OCI-LY7 (cell line): ENCODE measurements at regions of chr5 and their contacts with region 1.

Region 1: GRCh38 chr5:173057062-173057924 is 1.1 kb downstream of the CREBRF start:
- DNase-seq: peak; percentile 98
- H3K4me3 ChIP-seq: peak overlapping the region; percentile 89
- H3K27ac ChIP-seq: peak overlapping the region; percentile 83
- H3K4me1 ChIP-seq: peaks cover 40% of the 10 kb centered on the region
- CTCF ChIP-seq: no peak

Region 2: GRCh38 chr5:172770675-172771438 is 286.4 kb before region 1 on chr5 and contains the start of gene DUSP1:
- CTCF ChIA-PET with region 1: interaction called, 4 read pairs
- POLR2A ChIA-PET with region 1: interaction called, 5 read pairs
- intact Hi-C with region 1: loop called (anchors 5 kb)
- DNase-seq: peak; percentile 93
- H3K4me3 ChIP-seq: peak within 1 kb of the TSS; percentile 82
- H3K27ac ChIP-seq: peak within 1 kb of the TSS; percentile 44
- H3K4me1 ChIP-seq: peaks cover 29% of the 10 kb centered on the region
- CTCF ChIP-seq: peak; percentile 59
- total RNA-seq, gene DUSP1: 5.3 and 7.0 TPM in 2 replicates

Region 3: GRCh38 chr5:173035904-173036707 is 21.2 kb before region 1 on chr5:
- CTCF ChIA-PET with region 1: interaction called, 4 read pairs
- POLR2A ChIA-PET with region 1: interaction called, 53 read pairs
- intact Hi-C with region 1: loop called (anchors 1 kb)
- DNase-seq: peak; percentile 45
- H3K4me3 ChIP-seq: peak overlapping the region; percentile 61
- H3K27ac ChIP-seq: peak overlapping the region; percentile 96
- H3K4me1 ChIP-seq: peaks cover 54% of the 10 kb centered on the region
- CTCF ChIP-seq: no peak

Region 4: GRCh38 chr5:173144200-173145176 is 87.2 kb after region 1 on chr5 and contains the start of gene BNIP1:
- CTCF ChIA-PET with region 1: no interaction called
- POLR2A ChIA-PET with region 1: interaction called, 4 read pairs
- intact Hi-C with region 1: loop called (anchors 1 kb)
- DNase-seq: peak; percentile 95
- H3K4me3 ChIP-seq: peak within 1 kb of the TSS; percentile 98
- H3K27ac ChIP-seq: peak within 1 kb of the TSS; percentile 74
- H3K4me1 ChIP-seq: peaks cover 11% of the 10 kb centered on the region
- CTCF ChIP-seq: peak; percentile 83
- total RNA-seq, gene BNIP1: 15.2 and 23.1 TPM in 2 replicates

Region 5: GRCh38 chr5:173155912-173156311 is 98.6 kb after region 1 on chr5:
- CTCF ChIA-PET with region 1: no interaction called
- POLR2A ChIA-PET with region 1: no interaction called
- intact Hi-C with region 1: no loop called
- DNase-seq: no peak
- H3K4me3 ChIP-seq: no peak overlapping the region
- H3K27ac ChIP-seq: no peak overlapping the region
- H3K4me1 ChIP-seq: no peaks in the 10 kb centered on the region
- CTCF ChIP-seq: no peak